ENCODE measurements at regions of chr14 and their contacts with region 1.

Region 1: GRCh38 chr14:67280506-67280905 is 39.3 kb downstream of the PALS1 start:
- DNase-seq: no peak
- ATAC-seq: no peak
- H3K4me3 ChIP-seq: no peak overlapping the region
- H3K27ac ChIP-seq: no peak overlapping the region
- H3K4me1 ChIP-seq: peaks cover 5 to 18% of the 10 kb centered on the region in 2 donors
- H3K27me3 ChIP-seq: no peaks in the 10 kb centered on the region
- CTCF ChIP-seq: no peak
- POLR2A ChIP-seq: no peak

Region 2: DNA sequence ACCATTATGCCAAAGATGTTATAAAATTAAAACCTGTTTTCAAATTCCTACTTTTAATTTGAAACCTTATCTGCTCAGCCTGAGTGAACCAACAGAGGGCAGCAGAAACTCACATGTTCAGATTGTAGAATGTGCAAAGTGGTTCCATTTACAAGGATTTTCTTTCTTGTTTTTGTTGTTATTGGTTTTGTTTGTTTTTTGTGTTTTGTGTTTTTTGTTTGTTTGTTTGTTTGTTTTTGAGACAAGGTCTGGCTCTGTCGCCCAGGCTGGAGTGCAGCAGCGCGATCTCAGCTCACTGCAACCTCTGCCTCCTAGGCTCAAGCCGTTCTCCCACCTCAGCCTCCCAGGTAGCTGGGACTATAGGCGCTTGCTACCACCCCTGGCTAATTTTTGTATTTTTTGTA is 114.1 kb before region 1 on chr14:
- in situ Hi-C with region 1: loop called (anchors 5 to 10 kb)
- intact Hi-C with region 1: no loop called
- DNase-seq: no peak
- ATAC-seq: no peak
- H3K4me3 ChIP-seq: no peak overlapping the region
- H3K27ac ChIP-seq: no peak overlapping the region
- H3K4me1 ChIP-seq: no peaks in the 10 kb centered on the region
- H3K27me3 ChIP-seq: no peaks in the 10 kb centered on the region
- CTCF ChIP-seq: peak; percentile 40 to 64 (median 59)
- POLR2A ChIP-seq: no peak

Measured in gastrocnemius medialis (tissue), 4 donors.